Endothelial cell of umbilical vein (primary cell): ENCODE measurements at regions of chr17 and their contacts with region 1.

Region 1: GRCh38 chr17:38982858-38983746 is 15.9 kb upstream of the FBXO47 start:
- DNase-seq: peak; percentile 74
- H3K4me3 ChIP-seq: no peak overlapping the region
- H3K27ac ChIP-seq: no peak overlapping the region
- H3K4me1 ChIP-seq: no peaks in the 10 kb centered on the region
- H3K27me3 ChIP-seq: no peaks in the 10 kb centered on the region
- CTCF ChIP-seq: peak; percentile 62 to 63
- POLR2A ChIP-seq: no peak

Region 2: GRCh38 chr17:38476544-38476943 is 506.6 kb before region 1 on chr17:
- CTCF ChIA-PET with region 1: no interaction called
- POLR2A ChIA-PET with region 1: no interaction called
- dilution Hi-C with region 1: no loop called
- intact Hi-C with region 1: no loop called
- DNase-seq: no peak
- H3K4me3 ChIP-seq: no peak overlapping the region
- H3K27ac ChIP-seq: no peak overlapping the region
- H3K4me1 ChIP-seq: peaks cover 10% of the 10 kb centered on the region
- H3K27me3 ChIP-seq: no peaks in the 10 kb centered on the region
- CTCF ChIP-seq: no peak
- POLR2A ChIP-seq: no peak

Region 3: GRCh38 chr17:38908676-38909181 is 74.4 kb before region 1 on chr17:
- CTCF ChIA-PET with region 1: interaction called, 11 read pairs
- POLR2A ChIA-PET with region 1: interaction called, 3 read pairs
- dilution Hi-C with region 1: no loop called
- intact Hi-C with region 1: no loop called
- DNase-seq: peak; percentile 56
- H3K4me3 ChIP-seq: no peak overlapping the region
- H3K27ac ChIP-seq: peak overlapping the region; percentile 24
- H3K4me1 ChIP-seq: peaks cover 32% of the 10 kb centered on the region
- H3K27me3 ChIP-seq: no peaks in the 10 kb centered on the region
- CTCF ChIP-seq: no peak
- POLR2A ChIP-seq: no peak

Region 4: GRCh38 chr17:38967290-38967738 is 15.8 kb before region 1 on chr17 and contains the start of gene FBXO47:
- CTCF ChIA-PET with region 1: interaction called, 18 read pairs
- POLR2A ChIA-PET with region 1: no interaction called
- dilution Hi-C with region 1: no loop called
- intact Hi-C with region 1: no loop called
- DNase-seq: peak; percentile 93
- H3K4me3 ChIP-seq: peak within 1 kb of the TSS in 2 of 3 experiments; percentile 24 to 34
- H3K27ac ChIP-seq: no peak within 1 kb of the TSS
- H3K4me1 ChIP-seq: no peaks in the 10 kb centered on the region
- H3K27me3 ChIP-seq: peaks cover 0 to 4% of the 10 kb centered on the region in 2 experiments
- CTCF ChIP-seq: no peak
- POLR2A ChIP-seq: peak; percentile 63
- total RNA-seq, gene FBXO47: not detected in 2 replicates

Region 5: DNA sequence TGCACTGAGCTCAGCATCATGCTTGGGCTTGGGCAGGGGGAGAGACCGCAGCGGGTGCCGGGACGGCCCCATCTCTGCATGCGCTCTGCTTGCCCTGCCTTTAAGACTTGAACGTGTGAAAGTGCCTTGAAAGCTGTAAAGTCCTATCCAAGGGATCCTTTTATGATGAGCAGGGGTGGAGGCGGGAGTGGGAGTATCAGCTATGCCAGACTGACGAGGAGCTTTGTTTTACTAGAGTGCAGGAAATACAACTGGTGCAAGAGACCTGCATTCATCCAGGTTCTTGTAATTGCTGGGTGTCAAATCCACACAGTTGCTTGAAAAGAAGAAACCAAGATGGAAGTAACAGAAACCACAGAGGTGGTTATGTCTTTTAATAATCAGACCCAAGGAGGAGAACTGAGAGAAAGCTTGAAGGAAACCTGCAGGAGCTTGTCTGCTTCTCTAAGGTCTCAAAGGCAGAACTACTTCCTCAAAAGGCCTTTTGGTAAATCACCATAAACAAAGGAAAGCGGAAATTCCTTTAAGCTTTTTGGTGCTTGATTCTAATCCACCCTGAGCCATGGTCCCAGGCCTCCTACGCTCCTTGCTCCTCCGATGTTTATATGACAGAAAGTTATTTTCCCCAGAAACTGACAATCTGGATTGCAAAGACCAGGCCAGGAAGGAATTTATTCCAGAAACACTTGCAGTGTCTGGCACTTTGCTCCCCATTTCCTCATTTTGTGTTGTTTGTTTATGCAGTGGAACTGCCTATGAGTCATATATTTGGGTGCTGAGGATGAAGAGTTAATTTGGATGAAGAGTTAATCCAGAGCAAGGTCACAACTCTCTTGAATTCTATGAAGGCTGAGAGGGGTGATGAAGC is 35.4 kb after region 1 on chr17:
- CTCF ChIA-PET with region 1: interaction called, 18 read pairs
- POLR2A ChIA-PET with region 1: no interaction called
- dilution Hi-C with region 1: no loop called
- intact Hi-C with region 1: no loop called
- DNase-seq: peak; percentile 30
- H3K4me3 ChIP-seq: no peak overlapping the region
- H3K27ac ChIP-seq: no peak overlapping the region
- H3K4me1 ChIP-seq: peaks cover 15% of the 10 kb centered on the region
- H3K27me3 ChIP-seq: no peaks in the 10 kb centered on the region
- CTCF ChIP-seq: no peak
- POLR2A ChIP-seq: no peak

Region 6: DNA sequence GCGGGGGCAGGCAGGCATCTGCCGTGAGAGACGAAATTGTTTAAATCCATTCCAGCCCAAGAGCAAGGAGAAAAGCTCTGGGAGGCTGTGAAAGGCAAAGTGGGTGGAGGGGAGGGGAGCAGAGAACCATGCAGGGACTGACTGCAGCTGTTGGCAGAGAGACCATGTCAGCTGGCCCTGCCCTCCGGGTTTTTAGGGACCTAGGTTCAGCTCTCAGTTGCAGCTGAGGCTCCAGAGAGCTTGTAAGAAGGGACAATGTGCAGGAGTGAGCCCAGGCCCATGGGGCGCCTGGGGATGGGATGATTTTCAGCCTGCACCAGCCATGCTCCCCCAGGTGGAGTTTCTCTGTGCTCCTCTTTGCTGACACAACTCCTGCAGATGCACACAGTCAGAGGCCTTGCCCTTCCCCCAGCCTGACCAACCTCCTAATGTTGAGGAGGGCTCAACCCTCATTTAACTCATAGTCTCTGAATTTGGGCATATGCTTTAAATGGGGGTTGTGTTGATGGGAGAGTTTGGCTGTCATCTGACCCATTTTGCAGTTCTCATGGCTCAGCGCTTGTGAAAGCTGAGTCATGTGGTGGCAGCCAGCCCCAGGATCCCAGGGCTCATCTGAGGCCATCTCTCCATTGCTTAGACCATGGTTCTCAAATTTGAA is 97.4 kb after region 1 on chr17:
- CTCF ChIA-PET with region 1: interaction called, 16 read pairs
- POLR2A ChIA-PET with region 1: no interaction called
- dilution Hi-C with region 1: no loop called
- intact Hi-C with region 1: no loop called
- DNase-seq: no peak
- H3K4me3 ChIP-seq: no peak overlapping the region
- H3K27ac ChIP-seq: no peak overlapping the region
- H3K4me1 ChIP-seq: no peaks in the 10 kb centered on the region
- H3K27me3 ChIP-seq: peaks cover 2 to 20% of the 10 kb centered on the region in 2 experiments
- CTCF ChIP-seq: no peak
- POLR2A ChIP-seq: no peak

Region 7: GRCh38 chr17:39209317-39210092 is 226.4 kb after region 1 on chr17:
- CTCF ChIA-PET with region 1: interaction called, 11 read pairs
- POLR2A ChIA-PET with region 1: no interaction called
- dilution Hi-C with region 1: no loop called
- intact Hi-C with region 1: no loop called
- DNase-seq: peak; percentile 29
- H3K4me3 ChIP-seq: peak overlapping the region in 2 of 3 experiments; percentile 7 to 27
- H3K27ac ChIP-seq: no peak overlapping the region
- H3K4me1 ChIP-seq: peaks cover 5% of the 10 kb centered on the region
- H3K27me3 ChIP-seq: peaks cover 0 to 2% of the 10 kb centered on the region in 2 experiments
- CTCF ChIP-seq: no peak
- POLR2A ChIP-seq: no peak